AG04449 (cell line): ENCODE measurements at regions of chr15 and their contacts with region 1.

Region 1: DNA sequence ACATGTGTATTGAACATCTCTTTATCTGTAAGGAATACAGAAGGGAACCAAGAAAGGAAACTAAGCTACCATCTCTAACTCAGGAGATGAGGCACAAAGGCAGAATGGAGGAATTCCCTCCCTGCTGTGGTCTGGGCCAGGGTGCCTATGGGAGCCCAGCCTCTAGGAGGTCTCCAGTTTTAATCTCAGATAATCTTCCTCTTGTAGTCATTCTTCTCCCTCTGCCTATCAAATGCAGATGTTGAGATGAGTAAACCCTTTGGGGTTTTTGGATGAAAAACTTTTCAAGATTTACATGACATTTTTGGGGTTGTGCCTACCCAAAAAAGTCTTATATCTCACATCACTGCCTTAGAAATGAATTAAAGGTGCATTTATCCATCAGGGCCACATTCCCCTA is 23.3 kb downstream of the SCG5 start:
- DNase-seq: no peak
- H3K4me3 ChIP-seq: no peak overlapping the region
- CTCF ChIP-seq: no peak

Region 2: DNA sequence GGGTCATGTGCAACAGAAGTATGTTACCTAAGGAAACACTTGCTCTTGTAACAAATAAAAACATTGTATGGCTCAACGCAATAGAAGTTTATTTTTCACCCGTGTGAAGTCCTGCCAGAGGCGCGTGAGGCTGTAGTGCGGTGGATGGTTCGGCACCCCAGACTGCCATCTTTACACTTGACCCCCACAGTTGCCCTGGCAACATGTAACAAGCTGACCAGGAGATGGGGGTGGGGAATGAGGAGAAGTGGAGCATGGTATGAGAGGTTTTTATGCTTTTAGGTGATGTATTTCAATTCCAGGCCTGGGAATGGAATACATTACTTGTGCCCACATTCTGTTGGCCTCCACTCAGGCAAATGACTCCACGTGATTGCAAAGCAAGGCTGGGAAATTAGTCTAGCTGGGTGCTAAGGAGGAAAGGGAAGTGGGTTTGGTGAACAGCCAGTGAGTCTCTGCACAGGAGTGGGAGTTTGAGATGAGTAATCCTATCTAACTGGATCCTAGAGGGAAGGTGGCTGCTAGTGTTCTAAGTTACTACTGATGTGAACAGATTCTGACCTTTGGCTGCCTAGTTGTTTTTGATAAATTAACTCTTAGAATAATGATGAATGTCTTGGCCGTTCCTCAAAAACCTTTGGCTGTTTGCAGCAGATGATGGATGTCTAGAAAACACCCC is 19.2 kb after region 1 on chr15:
- CTCF ChIA-PET with region 1: interaction called, 21 read pairs
- POLR2A ChIA-PET with region 1: interaction called, 3 read pairs
- DNase-seq: no peak
- H3K4me3 ChIP-seq: no peak overlapping the region
- CTCF ChIP-seq: no peak

Region 3: DNA sequence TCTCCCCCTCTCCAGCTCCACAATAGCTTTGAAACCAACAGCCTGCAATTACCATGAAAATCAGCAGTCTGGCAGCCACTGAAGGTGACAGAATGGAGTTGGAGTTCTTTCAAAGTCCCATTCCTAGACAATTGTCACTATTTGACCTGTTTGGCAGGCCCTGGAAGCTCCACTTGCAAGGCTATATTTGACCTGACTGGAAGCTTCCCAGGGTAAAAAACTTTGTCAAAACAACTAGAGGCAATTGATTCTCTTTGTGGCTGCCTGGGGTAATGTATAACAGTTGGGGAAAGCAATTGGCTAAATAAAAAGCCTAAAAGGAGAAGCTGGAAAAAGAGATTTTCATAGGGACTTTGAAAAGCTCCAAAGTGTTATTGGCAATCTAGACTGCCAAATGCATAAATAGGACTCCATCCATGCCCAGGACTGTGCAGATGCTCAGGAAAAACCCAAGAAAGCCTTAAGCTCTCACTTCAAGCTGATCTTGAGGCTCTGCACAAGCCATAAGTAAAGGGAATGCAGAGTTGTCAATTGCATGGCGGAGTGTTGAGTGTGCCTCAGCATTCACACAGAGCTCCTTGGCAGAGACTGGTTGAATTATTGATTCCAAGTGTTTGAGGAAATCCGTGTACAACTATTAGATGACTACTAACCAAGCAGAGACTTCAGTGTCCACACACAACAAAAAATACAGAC is 71.4 kb after region 1 on chr15:
- CTCF ChIA-PET with region 1: interaction called, 18 read pairs
- POLR2A ChIA-PET with region 1: interaction called, 4 read pairs
- DNase-seq: no peak
- H3K4me3 ChIP-seq: no peak overlapping the region
- CTCF ChIP-seq: no peak

Region 4: DNA sequence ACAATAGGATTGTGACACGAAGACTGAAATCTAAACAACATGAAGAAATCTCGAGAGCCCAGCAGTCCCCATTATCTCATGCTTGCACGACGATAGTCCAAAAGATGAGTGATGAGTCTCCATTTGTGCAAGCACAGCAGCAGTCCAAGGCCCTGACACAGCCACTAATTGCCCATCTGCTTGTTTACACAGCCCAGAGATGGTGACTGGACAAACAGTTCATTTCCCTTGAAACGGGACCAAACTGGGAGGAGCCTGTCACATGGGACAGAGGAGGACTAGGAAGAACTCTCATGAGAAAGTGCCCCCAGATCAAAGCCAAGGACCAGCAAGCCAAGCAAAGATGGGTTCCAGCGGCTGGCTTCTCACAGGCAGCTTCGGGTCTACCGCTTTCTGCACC is 174.0 kb after region 1 on chr15:
- CTCF ChIA-PET with region 1: interaction called, 33 read pairs
- POLR2A ChIA-PET with region 1: no interaction called
- DNase-seq: peak; percentile 88
- H3K4me3 ChIP-seq: peak overlapping the region; percentile 40
- CTCF ChIP-seq: no peak

Region 5: GRCh38 chr15:32956006-32956405 is 291.2 kb after region 1 on chr15:
- CTCF ChIA-PET with region 1: interaction called, 18 read pairs
- POLR2A ChIA-PET with region 1: no interaction called
- DNase-seq: peak; percentile 83
- H3K4me3 ChIP-seq: no peak overlapping the region
- CTCF ChIP-seq: peak; percentile 69